Gastrocnemius medialis (tissue), 4 donors: ENCODE measurements at regions of chr2 and their contacts with region 1.

Region 1: GRCh38 chr2:217836901-217837491 is 165.8 kb downstream of the TNS1 start:
- DNase-seq: peak; percentile 93 to 98
- ATAC-seq: peak; percentile 39 to 41
- H3K4me3 ChIP-seq: peak overlapping the region in 1 of 4 donors; percentile 9
- H3K27ac ChIP-seq: peak overlapping the region; percentile 99 to 100 (median 99)
- H3K4me1 ChIP-seq: peaks cover 96% of the 10 kb centered on the region in 2 donors
- H3K27me3 ChIP-seq: no peaks in the 10 kb centered on the region
- CTCF ChIP-seq: peak in 3 of 5 experiments; percentile 30 to 43 (median 34)
- POLR2A ChIP-seq: peak in 1 of 2 donors; percentile 48

Region 2: DNA sequence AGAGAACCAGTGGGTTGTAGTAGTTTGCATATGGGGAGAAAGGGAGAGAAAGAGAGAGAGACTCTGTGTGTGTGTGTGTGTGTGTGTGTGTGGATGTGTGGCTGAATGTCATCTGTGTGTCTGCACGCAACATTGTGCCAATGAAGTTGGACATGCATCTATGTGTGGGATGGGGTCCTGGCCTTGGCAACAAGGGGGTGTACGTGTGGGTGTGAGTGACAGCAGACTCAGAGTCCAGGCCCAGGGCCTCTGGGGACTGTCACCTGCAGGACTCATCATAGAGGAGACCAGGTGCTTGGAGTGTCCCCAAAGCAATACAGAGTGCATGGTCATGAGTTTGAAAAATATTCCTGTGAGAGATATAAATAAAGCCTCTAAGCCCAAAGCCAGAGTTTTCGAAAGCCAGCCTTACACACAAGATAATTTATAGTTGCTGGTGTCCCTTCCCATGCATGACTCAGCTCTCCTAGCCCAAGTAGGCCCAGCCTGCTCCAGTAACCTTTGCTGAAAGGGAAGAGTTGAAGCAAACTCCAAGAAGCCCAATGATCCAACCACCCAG is 1037.0 kb before region 1 on chr2:
- in situ Hi-C with region 1: no loop called
- intact Hi-C with region 1: loop called (anchors 5 kb)
- DNase-seq: peak; percentile 91 to 93
- ATAC-seq: peak; percentile 69 to 75
- H3K4me3 ChIP-seq: no peak overlapping the region
- H3K27ac ChIP-seq: peak overlapping the region; percentile 87 to 98 (median 96)
- H3K4me1 ChIP-seq: peaks cover 55 to 57% of the 10 kb centered on the region in 2 donors
- H3K27me3 ChIP-seq: no peaks in the 10 kb centered on the region
- CTCF ChIP-seq: peak in 1 of 5 experiments; percentile 26
- POLR2A ChIP-seq: peak; percentile 21 to 33

Region 3: GRCh38 chr2:217798743-217799562 is 38.0 kb before region 1 on chr2:
- in situ Hi-C with region 1: no loop called
- intact Hi-C with region 1: loop called (anchors 5 kb)
- DNase-seq: peak in 1 of 2 donors; percentile 42
- ATAC-seq: no peak
- H3K4me3 ChIP-seq: no peak overlapping the region
- H3K27ac ChIP-seq: peak overlapping the region; percentile 73 to 83 (median 81)
- H3K4me1 ChIP-seq: peaks cover 9 to 43% of the 10 kb centered on the region in 2 donors
- H3K27me3 ChIP-seq: no peaks in the 10 kb centered on the region
- CTCF ChIP-seq: no peak
- POLR2A ChIP-seq: no peak

Region 4: DNA sequence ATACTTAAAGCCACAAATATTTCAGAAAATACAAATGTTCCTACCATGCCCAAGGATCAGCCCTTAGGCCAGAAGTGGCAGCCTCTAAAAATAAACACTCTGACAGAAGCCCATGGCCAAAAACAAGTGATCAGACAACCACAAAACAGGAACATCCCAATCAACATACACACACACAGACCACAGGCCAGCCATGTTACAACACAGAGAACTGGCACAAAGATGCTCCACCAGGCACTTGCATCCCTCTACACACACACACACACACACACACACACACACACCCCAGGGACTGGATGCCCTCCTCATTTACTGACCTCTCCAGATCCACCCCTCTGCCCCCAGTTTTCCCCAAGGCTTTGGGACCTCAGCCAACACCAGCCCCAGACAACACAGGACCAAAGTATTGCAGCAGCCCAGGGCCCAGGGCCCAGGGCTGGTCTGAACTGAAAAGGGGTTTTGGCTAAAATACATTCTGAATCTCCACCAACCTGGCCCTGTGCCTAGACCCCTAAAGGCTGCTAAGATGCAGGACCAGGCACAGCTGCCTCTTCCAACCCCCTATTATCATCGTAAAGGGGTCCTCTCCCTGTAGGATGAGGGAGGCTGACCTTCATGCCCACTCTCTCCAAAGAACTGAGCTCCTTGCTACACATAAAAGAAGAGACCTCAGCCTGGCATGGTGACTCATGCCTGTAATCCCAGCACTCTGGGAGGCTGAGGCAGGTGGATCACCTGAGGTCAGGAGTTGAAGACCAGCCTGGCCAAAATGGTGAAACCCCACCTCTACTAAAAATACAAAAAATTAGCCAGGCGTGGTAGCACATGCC is 14.4 kb after region 1 on chr2:
- in situ Hi-C with region 1: no loop called
- intact Hi-C with region 1: loop called (anchors 1 kb)
- DNase-seq: peak; percentile 83 to 84
- ATAC-seq: peak; percentile 47 to 62
- H3K4me3 ChIP-seq: peak overlapping the region; percentile 48 to 86 (median 74)
- H3K27ac ChIP-seq: peak overlapping the region; percentile 99 to 100 (median 99)
- H3K4me1 ChIP-seq: peaks cover 97 to 99% of the 10 kb centered on the region in 2 donors
- H3K27me3 ChIP-seq: no peaks in the 10 kb centered on the region
- CTCF ChIP-seq: no peak
- POLR2A ChIP-seq: peak; percentile 57 to 77

Region 5: GRCh38 chr2:218832520-218832919 is 995.5 kb after region 1 on chr2:
- in situ Hi-C with region 1: no loop called
- intact Hi-C with region 1: loop called (anchors 10 kb)
- DNase-seq: peak; percentile 77 to 91
- ATAC-seq: peak; percentile 66 to 76
- H3K4me3 ChIP-seq: no peak overlapping the region
- H3K27ac ChIP-seq: peak overlapping the region; percentile 95
- H3K4me1 ChIP-seq: peaks cover 64 to 65% of the 10 kb centered on the region in 2 donors
- H3K27me3 ChIP-seq: no peaks in the 10 kb centered on the region
- CTCF ChIP-seq: no peak
- POLR2A ChIP-seq: no peak

Region 6: DNA sequence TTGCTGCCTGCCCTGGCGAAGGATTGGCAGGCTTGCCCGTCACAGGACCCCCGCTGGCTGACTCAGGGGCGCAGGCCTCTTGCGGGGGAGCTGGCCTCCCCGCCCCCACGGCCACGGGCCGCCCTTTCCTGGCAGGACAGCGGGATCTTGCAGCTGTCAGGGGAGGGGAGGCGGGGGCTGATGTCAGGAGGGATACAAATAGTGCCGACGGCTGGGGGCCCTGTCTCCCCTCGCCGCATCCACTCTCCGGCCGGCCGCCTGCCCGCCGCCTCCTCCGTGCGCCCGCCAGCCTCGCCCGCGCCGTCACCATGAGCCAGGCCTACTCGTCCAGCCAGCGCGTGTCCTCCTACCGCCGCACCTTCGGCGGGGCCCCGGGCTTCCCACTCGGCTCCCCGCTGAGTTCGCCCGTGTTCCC is 1581.2 kb after region 1 on chr2 and contains the start of gene DES:
- in situ Hi-C with region 1: no loop called
- intact Hi-C with region 1: loop called (anchors 10 kb)
- DNase-seq: peak; percentile 87 to 94
- ATAC-seq: peak; percentile 47 to 55
- H3K4me3 ChIP-seq: peak within 1 kb of the TSS; percentile 75 to 95 (median 83)
- H3K27ac ChIP-seq: peak within 1 kb of the TSS; percentile 95 to 100 (median 98)
- H3K4me1 ChIP-seq: peaks cover 52 to 62% of the 10 kb centered on the region in 2 donors
- H3K27me3 ChIP-seq: no peaks in the 10 kb centered on the region
- CTCF ChIP-seq: no peak
- POLR2A ChIP-seq: peak; percentile 94 to 98
- total RNA-seq, gene DES: 19,008 to 28,635 (median 23,575) TPM